ENCODE measurements at regions of chr19 and their contacts with region 1.

Region 1: GRCh38 chr19:1103708-1104310 is at the start of gene GPX4:
- DNase-seq: peak; percentile 99
- ATAC-seq: peak; percentile 68 to 73
- H3K4me3 ChIP-seq: peak within 1 kb of the TSS; percentile 69 to 98 (median 83)
- H3K27ac ChIP-seq: peak within 1 kb of the TSS; percentile 95 to 100 (median 98)
- H3K4me1 ChIP-seq: peaks cover 42 to 47% of the 10 kb centered on the region in 2 donors
- H3K27me3 ChIP-seq: no peaks in the 10 kb centered on the region
- CTCF ChIP-seq: no peak
- POLR2A ChIP-seq: peak; percentile 92 to 99
- total RNA-seq, gene GPX4: 616 to 907 (median 819) TPM

Region 2: DNA sequence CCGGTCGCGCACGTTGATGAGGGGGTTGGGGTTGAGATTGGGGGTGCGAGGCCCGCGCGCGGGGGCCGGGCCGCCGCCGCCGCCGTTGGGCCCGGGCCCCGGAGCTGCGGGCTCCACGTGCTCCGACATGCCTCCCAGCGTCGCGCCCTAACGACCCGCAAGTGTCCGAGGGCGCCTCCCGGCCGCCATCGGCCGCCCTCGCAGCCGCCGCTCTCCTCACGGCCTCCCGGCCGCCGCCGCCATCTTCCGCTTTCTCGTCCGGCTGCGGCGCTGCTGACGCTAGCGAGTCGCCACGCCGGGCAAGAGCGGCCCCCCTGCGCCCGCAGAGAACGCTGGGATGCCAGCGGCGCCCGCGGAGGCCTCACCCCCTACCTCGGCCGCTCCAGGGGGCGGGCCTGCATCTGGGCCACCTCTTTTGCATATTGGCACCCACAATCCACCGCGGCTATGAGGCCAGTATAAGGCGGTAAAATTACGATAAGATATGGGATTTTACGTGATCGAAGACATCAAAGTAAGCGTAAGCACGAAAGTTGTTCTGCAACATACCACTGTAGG is 82.9 kb before region 1 on chr19 and contains the start of gene TMEM259:
- in situ Hi-C with region 1: no loop called
- intact Hi-C with region 1: loop called (anchors 5 kb)
- DNase-seq: peak; percentile 97 to 98
- ATAC-seq: peak; percentile 79 to 85
- H3K4me3 ChIP-seq: peak within 1 kb of the TSS; percentile 86 to 99 (median 90)
- H3K27ac ChIP-seq: peak within 1 kb of the TSS; percentile 89 to 94 (median 91)
- H3K4me1 ChIP-seq: peaks cover 40 to 48% of the 10 kb centered on the region in 2 donors
- H3K27me3 ChIP-seq: peaks cover 3 to 9% (median 8%) of the 10 kb centered on the region in 3 donors
- CTCF ChIP-seq: peak in 1 of 5 experiments; percentile 27
- POLR2A ChIP-seq: peak; percentile 77 to 85
- total RNA-seq, gene TMEM259: 98.5 to 150 (median 124) TPM

Region 3: GRCh38 chr19:1039646-1040475 is 63.9 kb before region 1 on chr19 and contains the start of gene ABCA7:
- in situ Hi-C with region 1: no loop called
- intact Hi-C with region 1: loop called (anchors 2 kb)
- DNase-seq: peak; percentile 98 to 99
- ATAC-seq: peak; percentile 78 to 79
- H3K4me3 ChIP-seq: peak within 1 kb of the TSS; percentile 53 to 68 (median 58)
- H3K27ac ChIP-seq: peak within 1 kb of the TSS; percentile 79 to 87 (median 82)
- H3K4me1 ChIP-seq: peaks cover 25 to 29% of the 10 kb centered on the region in 2 donors
- H3K27me3 ChIP-seq: no peaks in the 10 kb centered on the region
- CTCF ChIP-seq: no peak
- POLR2A ChIP-seq: peak; percentile 94 to 96
- total RNA-seq, gene ABCA7: 6.0 to 20.0 (median 15.0) TPM

Region 4: DNA sequence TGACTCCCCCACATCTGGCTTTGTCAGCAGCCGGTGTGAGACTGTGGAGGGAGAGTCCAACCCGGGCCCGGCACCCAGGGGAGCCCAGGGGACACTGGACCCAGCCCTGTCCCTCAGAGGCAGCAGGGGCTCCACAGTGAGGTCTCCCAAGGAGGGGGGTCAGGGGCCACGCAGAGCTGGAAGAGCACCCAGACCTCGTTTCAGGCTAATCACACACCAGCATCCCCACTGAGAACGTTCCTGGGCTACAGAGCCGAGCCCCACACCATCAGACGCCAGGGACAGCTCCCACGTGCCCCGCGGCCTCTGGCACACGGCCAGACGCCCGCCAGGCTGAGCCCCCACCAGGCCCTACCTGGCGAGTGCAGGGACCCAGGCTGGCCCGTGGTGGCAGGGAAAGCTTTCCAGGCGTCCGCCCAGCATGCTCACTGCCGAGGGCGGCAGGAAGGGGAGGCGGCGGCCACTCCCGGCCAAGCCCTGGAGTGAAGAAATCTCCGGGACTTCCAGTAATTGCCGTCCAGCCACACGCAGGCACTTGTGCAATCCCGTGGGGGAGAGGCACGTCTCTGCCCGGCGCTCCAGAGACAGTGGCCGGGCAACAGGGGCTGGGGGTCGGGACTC is 51.0 kb after region 1 on chr19:
- in situ Hi-C with region 1: no loop called
- intact Hi-C with region 1: loop called (anchors 5 kb)
- DNase-seq: peak; percentile 89 to 94
- ATAC-seq: peak; percentile 82 to 90
- H3K4me3 ChIP-seq: peak overlapping the region; percentile 22 to 50 (median 38)
- H3K27ac ChIP-seq: peak overlapping the region; percentile 86 to 96 (median 92)
- H3K4me1 ChIP-seq: peaks cover 48 to 52% of the 10 kb centered on the region in 2 donors
- H3K27me3 ChIP-seq: no peaks in the 10 kb centered on the region
- CTCF ChIP-seq: no peak
- POLR2A ChIP-seq: peak; percentile 81 to 84

Region 5: DNA sequence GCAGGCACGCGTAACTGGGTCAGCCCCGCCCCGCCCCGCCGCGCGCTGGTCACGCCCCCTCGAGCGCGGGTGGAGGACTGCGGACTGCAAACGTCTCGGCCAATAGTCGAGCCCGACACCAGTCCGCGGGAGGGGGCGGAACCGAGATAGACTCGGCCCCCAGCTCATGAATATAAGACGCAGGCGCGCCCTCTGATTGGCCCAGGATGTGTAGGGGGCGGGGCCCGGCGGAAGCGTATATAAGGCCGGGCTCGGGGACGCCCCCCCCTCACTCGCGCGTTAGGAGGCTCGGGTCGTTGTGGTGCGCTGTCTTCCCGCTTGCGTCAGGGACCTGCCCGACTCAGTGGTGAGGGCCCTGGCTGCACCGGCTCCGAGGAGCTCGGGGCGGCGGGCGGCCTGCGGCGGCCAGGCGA is 165.3 kb after region 1 on chr19 and contains the start of gene CIRBP:
- in situ Hi-C with region 1: no loop called
- intact Hi-C with region 1: loop called (anchors 1 kb)
- DNase-seq: peak; percentile 100
- ATAC-seq: peak; percentile 66 to 76
- H3K4me3 ChIP-seq: peak within 1 kb of the TSS; percentile 51 to 81 (median 72)
- H3K27ac ChIP-seq: peak within 1 kb of the TSS; percentile 92 to 99 (median 98)
- H3K4me1 ChIP-seq: peaks cover 66 to 72% of the 10 kb centered on the region in 2 donors
- H3K27me3 ChIP-seq: no peaks in the 10 kb centered on the region
- CTCF ChIP-seq: peak in 1 of 5 experiments; percentile 40
- POLR2A ChIP-seq: peak; percentile 99 to 100
- total RNA-seq, gene CIRBP: 274 to 578 (median 418) TPM